HepG2 (cell line): ENCODE measurements at regions of chr4 and their contacts with region 1.

Region 1: GRCh38 chr4:88211473-88212252 is 53.2 kb upstream of the ABCG2 start:
- DNase-seq: peak; percentile 52
- ATAC-seq: peak; percentile 64
- H3K4me3 ChIP-seq: peak overlapping the region in 2 of 3 experiments; percentile 22 to 30; a peak in 3 of 6 replicates
- H3K27ac ChIP-seq: no peak overlapping the region
- H3K4me1 ChIP-seq: peaks cover 26% of the 10 kb centered on the region
- H3K27me3 ChIP-seq: no peaks in the 10 kb centered on the region; a peak in 1 of 5 replicates
- CTCF ChIP-seq: peak; percentile 77
- EP300 ChIP-seq: no peak
- POLR2A ChIP-seq: no peak
- RAD21 ChIP-seq: peak; percentile 88

Region 2: GRCh38 chr4:87848622-87849351 is 362.9 kb before region 1 on chr4:
- CTCF ChIA-PET with region 1: no interaction called
- POLR2A ChIA-PET with region 1: no interaction called
- in situ Hi-C with region 1: loop called (anchors 10 kb)
- intact Hi-C with region 1: loop called (anchors 2 kb)
- DNase-seq: peak; percentile 47
- ATAC-seq: peak; percentile 99
- H3K4me3 ChIP-seq: peak overlapping the region in 2 of 3 experiments; percentile 36 to 46; a peak in 3 of 6 replicates
- H3K27ac ChIP-seq: no peak overlapping the region
- H3K4me1 ChIP-seq: peaks cover 27% of the 10 kb centered on the region
- H3K27me3 ChIP-seq: peaks cover 0 to 21% of the 10 kb centered on the region in 2 experiments; a peak in 2 of 5 replicates
- CTCF ChIP-seq: peak; percentile 79
- EP300 ChIP-seq: no peak
- POLR2A ChIP-seq: no peak
- RAD21 ChIP-seq: 0 out of 2 replicates have a peak, but pooled peaks have one; percentile 9

Region 3: GRCh38 chr4:88033309-88033708 is 178.4 kb before region 1 on chr4:
- CTCF ChIA-PET with region 1: interaction called, 62 read pairs
- POLR2A ChIA-PET with region 1: interaction called, 4 read pairs
- in situ Hi-C with region 1: no loop called
- intact Hi-C with region 1: loop called (anchors 1 kb)
- DNase-seq: peak; percentile 71
- ATAC-seq: peak; percentile 61
- H3K4me3 ChIP-seq: no peak overlapping the region
- H3K27ac ChIP-seq: no peak overlapping the region
- H3K4me1 ChIP-seq: no peaks in the 10 kb centered on the region
- H3K27me3 ChIP-seq: no peaks in the 10 kb centered on the region
- CTCF ChIP-seq: peak; percentile 73
- EP300 ChIP-seq: no peak
- POLR2A ChIP-seq: no peak
- RAD21 ChIP-seq: peak; percentile 69; the same call in 1 of the 2 replicates

Region 4: DNA sequence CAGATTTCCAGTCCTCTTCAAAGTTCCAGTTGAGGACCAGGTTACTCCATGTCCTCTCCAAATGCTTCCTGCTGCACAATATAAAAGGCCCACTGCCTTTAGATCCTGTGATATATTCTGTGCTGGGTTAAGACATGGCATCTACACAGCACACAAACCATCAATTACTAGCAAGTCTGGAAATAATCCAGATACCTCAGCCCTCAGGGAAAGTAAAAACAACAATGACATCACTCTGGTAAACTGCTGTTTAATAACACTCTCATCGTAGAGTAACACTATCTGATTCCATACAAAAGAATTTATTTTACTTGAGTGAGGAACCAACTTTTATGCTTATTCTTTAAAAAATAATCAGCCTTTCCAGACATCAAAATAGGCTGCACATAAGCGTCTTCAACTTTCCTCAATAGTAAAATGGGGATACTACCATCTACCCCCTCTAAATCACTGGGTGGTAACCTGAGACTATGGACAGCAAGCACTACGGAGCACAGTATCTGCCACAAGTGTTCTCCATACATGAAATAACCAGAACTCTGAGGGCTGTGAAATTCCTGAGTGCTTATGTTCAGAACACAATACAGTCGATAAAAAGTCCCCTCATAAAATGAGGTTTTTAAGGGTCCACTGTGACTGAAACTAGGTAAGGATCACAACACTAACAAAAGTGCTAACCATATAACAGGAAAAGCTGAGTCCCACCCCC is 106.6 kb before region 1 on chr4:
- CTCF ChIA-PET with region 1: no interaction called
- POLR2A ChIA-PET with region 1: no interaction called
- in situ Hi-C with region 1: no loop called
- intact Hi-C with region 1: loop called (anchors 5 kb)
- DNase-seq: no peak
- ATAC-seq: no peak
- H3K4me3 ChIP-seq: no peak overlapping the region
- H3K27ac ChIP-seq: peak overlapping the region; percentile 18
- H3K4me1 ChIP-seq: peaks cover 56% of the 10 kb centered on the region
- H3K27me3 ChIP-seq: no peaks in the 10 kb centered on the region
- CTCF ChIP-seq: no peak
- EP300 ChIP-seq: no peak
- POLR2A ChIP-seq: no peak
- RAD21 ChIP-seq: no peak

Region 5: GRCh38 chr4:88284439-88285234 is 73.0 kb after region 1 on chr4 and contains the start of gene PPM1K:
- CTCF ChIA-PET with region 1: no interaction called
- POLR2A ChIA-PET with region 1: no interaction called
- in situ Hi-C with region 1: no loop called
- intact Hi-C with region 1: loop called (anchors 5 kb)
- DNase-seq: peak; percentile 95
- ATAC-seq: peak; percentile 95
- H3K4me3 ChIP-seq: peak within 1 kb of the TSS; percentile 74 to 81 (median 76)
- H3K27ac ChIP-seq: peak within 1 kb of the TSS; percentile 82
- H3K4me1 ChIP-seq: peaks cover 32% of the 10 kb centered on the region
- H3K27me3 ChIP-seq: no peaks in the 10 kb centered on the region
- CTCF ChIP-seq: peak; percentile 65
- EP300 ChIP-seq: peak in 1 of 2 experiments; percentile 22; a peak in 1 of 4 replicates
- POLR2A ChIP-seq: peak in 1 of 2 experiments; percentile 46; a peak in 2 of 4 replicates
- RAD21 ChIP-seq: no peak
- total RNA-seq, gene PPM1K: 17.8 and 23.3 TPM in 2 replicates

Region 6: GRCh38 chr4:88514557-88515511 is 303.2 kb after region 1 on chr4:
- CTCF ChIA-PET with region 1: interaction called, 4 read pairs
- POLR2A ChIA-PET with region 1: no interaction called
- in situ Hi-C with region 1: loop called (anchors 5 kb)
- intact Hi-C with region 1: no loop called
- DNase-seq: peak; percentile 76
- ATAC-seq: peak; percentile 92
- H3K4me3 ChIP-seq: no peak overlapping the region
- H3K27ac ChIP-seq: no peak overlapping the region
- H3K4me1 ChIP-seq: peaks cover 18% of the 10 kb centered on the region
- H3K27me3 ChIP-seq: peaks cover 0 to 2% of the 10 kb centered on the region in 2 experiments; a peak in 1 of 5 replicates
- CTCF ChIP-seq: no peak
- EP300 ChIP-seq: peak in 1 of 2 experiments; percentile 68; a peak in 2 of 4 replicates
- POLR2A ChIP-seq: no peak
- RAD21 ChIP-seq: no peak